ENCODE measurements at regions of chr9 and their contacts with region 1.

Region 1: GRCh38 chr9:112041536-112042243 is 133.4 kb downstream of the SUSD1 start:
- DNase-seq: peak; percentile 96 to 99
- H3K4me3 ChIP-seq: no peak overlapping the region
- H3K27ac ChIP-seq: peak overlapping the region; percentile 83
- H3K4me1 ChIP-seq: peaks cover 60% of the 10 kb centered on the region
- H3K27me3 ChIP-seq: no peaks in the 10 kb centered on the region
- CTCF ChIP-seq: no peak

Region 2: DNA sequence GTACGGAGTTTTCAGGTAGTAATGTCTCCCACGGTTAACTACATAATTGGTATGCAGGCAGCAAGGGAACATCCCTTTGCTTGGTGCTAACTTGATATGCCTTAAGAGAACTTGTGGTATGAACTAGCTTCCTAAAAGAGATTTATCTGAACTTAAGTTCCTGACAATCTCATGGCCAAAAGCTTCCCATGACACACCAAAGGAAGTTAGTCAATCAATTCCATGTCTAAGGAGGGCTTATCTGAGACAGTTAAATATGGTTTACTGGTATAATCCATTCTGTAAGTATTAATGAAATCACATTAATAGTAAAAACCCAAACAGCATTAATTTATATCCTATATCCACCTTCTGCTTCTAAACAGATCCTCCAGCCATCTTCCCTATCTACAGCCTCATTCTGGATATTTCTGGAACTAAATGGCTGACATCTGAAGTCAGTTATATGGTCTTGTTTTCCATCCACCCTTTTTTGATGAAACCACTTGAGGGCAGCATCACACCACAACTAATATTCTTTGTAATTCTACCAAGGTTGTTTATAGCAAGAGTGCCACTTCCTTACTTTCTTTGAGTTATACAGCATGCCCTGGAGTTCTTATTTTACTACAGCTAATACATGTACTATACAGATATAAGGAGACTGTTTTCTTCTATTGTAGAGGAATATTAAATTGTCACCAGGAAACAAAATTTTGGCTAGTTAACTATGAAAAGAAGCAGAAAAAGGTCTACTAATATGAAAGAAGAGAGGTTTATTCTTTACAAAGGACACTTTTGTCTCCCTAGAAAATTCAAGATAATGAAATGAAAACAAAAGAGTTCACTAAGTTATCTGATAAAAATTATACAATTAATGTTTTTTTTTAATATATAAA is 281.7 kb before region 1 on chr9:
- CTCF ChIA-PET with region 1: no interaction called
- POLR2A ChIA-PET with region 1: no interaction called
- intact Hi-C with region 1: loop called (anchors 1 kb)
- DNase-seq: peak; percentile 53 to 73
- H3K4me3 ChIP-seq: no peak overlapping the region
- H3K27ac ChIP-seq: no peak overlapping the region
- H3K4me1 ChIP-seq: peaks cover 6% of the 10 kb centered on the region; the same call in 1 of the 2 replicates
- H3K27me3 ChIP-seq: no peaks in the 10 kb centered on the region
- CTCF ChIP-seq: peak; percentile 81

Region 3: GRCh38 chr9:111896353-111896958 is 145.2 kb before region 1 on chr9 and contains the start of gene UGCG:
- CTCF ChIA-PET with region 1: no interaction called
- POLR2A ChIA-PET with region 1: interaction called, 3 read pairs
- intact Hi-C with region 1: loop called (anchors 1 kb)
- DNase-seq: peak; percentile 68 to 96
- H3K4me3 ChIP-seq: peak within 1 kb of the TSS; percentile 76
- H3K27ac ChIP-seq: peak within 1 kb of the TSS; percentile 83
- H3K4me1 ChIP-seq: peaks cover 59% of the 10 kb centered on the region
- H3K27me3 ChIP-seq: no peaks in the 10 kb centered on the region
- CTCF ChIP-seq: no peak
- total RNA-seq, gene UGCG: 79.8 and 88.7 TPM in 2 replicates

Region 4: DNA sequence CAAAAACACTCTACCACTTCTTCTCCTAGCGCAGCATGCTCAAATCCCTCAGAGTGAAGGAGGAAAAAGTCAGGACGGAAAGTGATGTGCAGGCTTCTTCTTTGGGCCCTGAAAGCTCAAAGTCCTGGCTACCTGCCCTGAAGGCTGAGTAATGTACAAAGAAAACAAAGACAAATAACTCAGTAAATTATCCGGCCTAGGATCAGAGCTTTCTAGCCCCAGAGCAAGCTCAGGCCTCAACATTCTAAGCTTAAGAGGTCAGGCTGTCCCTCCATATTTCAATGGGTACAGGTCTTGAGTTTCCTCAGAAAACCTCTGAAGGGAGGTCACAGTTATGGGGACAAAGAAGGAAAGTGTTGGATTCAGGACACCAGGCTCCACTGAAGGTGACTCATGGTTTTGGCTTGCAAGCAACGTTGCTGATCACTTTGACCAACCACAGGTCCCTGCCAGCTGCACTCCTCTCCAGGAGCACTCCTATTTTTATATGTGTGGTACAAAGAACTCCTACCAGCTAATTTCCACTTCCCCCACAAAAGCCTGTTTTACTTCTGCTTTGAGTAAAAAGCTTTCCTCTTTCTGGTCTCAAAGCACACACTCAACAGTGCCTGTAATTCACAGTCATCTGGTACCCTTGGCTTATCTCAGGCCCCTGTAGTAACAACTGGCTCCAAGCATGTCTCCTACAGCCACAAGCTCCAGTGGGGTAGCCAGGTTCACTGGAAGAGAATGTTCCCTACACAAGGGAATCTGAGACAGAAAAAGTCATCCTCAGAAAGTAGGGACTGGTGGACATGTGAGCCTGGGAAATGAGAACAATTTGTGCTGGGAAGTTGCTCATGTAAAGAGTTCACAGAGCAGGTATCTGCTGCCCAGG is 29.4 kb before region 1 on chr9:
- CTCF ChIA-PET with region 1: no interaction called
- POLR2A ChIA-PET with region 1: no interaction called
- intact Hi-C with region 1: loop called (anchors 1 kb)
- DNase-seq: peak; percentile 83 to 91
- H3K4me3 ChIP-seq: peak overlapping the region; percentile 3; the same call in 1 of the 2 replicates
- H3K27ac ChIP-seq: peak overlapping the region; percentile 91
- H3K4me1 ChIP-seq: peaks cover 45% of the 10 kb centered on the region
- H3K27me3 ChIP-seq: no peaks in the 10 kb centered on the region
- CTCF ChIP-seq: no peak

Region 5: DNA sequence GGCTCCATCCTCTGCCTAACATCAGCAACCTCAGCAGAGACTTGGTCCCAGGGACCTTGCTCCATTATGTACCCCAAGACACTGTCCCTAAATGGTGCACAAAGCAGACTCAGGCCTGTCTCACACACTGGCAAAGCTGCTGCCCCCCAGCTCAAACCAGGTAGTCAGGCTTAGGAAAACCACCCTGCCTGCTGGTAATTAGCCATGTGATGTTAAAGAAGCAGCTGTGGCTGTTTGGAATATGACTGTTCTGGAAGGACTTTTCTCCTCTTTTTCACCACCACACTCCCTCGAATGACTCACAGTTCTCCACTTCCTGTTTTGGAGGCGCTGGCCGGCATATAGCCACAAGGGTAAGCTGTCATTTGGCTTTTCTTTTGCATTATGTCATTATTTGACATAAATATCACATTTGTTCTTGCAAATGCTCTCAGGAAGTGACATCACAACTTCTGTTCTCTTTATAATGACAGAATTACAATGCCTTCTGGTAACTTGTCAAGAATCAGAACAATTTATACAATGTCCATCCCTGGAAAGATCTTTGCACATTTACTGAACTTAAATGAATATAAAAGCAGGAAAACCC is 19.6 kb after region 1 on chr9:
- CTCF ChIA-PET with region 1: no interaction called
- POLR2A ChIA-PET with region 1: interaction called, 3 read pairs
- intact Hi-C with region 1: loop called (anchors 1 kb)
- DNase-seq: peak; percentile 68 to 93
- H3K4me3 ChIP-seq: no peak overlapping the region
- H3K27ac ChIP-seq: peak overlapping the region; percentile 53
- H3K4me1 ChIP-seq: peaks cover 39% of the 10 kb centered on the region
- H3K27me3 ChIP-seq: no peaks in the 10 kb centered on the region
- CTCF ChIP-seq: no peak